Head of caudate nucleus (tissue), 42 donors: ENCODE measurements at regions of chr3 and their contacts with region 1.

Region 1: GRCh38 chr3:43998836-43999727 is 242.6 kb upstream of the TOPAZ1 start:
- DNase-seq: peak in 39 of 42 donors; percentile 38 to 91 (median 75)

Region 2: DNA sequence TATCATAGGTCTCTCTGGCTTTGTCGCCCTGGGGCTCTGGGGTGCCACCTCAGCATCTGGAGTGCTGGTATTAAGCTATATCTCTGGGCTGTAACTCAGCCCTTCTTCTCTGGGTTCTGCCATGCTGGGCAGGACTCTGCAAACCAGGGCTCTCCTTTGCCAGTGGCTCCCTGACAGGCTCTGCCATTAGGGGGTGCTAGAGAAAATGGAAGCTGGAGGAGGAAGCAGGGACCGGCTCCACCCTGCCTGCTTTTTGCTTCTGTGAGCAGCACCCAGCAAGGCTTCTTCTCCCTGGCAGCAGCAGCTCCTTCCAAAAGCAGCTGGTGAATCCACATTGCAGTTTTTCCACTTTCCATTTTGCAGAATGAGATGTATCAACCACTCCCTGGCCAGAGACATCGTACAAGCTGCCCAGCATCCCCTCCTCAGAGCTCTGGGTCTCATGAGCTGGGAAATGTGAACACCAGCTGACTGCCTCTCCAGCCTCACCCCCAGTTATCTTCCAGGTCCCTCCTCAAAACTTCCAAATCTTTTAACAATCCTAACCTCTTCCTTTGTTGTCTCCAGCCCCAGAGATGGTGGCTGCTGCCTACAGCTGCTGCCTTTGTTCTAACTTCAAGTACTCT is 143.3 kb before region 1 on chr3:
- intact Hi-C with region 1: loop called (anchors 5 kb)
- DNase-seq: peak; percentile 49 to 91 (median 73)

Region 3: GRCh38 chr3:44065311-44066094 is 66.4 kb after region 1 on chr3:
- intact Hi-C with region 1: loop called (anchors 10 kb)
- DNase-seq: peak in 4 of 42 donors; percentile 16 to 42 (median 30)

Region 4: DNA sequence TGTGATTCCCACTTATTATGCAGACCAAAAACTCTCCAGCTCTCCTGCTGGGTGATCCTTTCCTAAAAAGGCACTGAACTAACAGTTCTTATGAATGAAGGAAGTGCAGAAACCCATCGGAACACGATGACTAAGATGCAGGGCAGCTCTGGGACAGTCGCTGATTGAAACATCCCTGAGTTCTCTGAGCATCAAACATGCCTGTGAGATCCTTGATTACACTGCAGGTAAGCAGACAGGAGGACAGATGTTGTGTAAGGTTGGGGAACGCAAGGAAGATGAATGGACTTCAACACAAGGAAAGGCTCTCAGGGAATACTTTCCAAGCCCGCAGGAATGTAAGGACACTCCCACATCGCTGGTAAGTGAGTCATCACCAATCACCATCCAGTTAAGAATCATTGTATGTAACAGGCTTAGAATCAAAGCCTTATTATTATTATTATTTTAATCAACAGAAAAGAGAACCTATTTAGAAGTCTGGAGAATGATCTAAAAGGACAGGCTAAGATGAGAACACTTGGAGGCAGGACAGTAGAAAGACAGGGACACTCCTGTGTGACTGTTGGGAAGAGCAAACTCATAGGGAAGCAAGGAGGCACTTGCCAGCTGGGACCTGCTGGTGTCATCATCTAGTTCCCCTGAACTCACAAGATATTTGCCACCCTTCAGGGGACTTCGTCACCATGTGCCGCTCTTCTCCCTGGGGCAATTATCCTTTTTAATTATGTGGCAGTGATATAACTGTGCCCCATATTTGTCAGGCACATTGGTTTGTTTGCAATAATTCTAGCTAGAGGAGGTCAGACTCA is 1201.0 kb after region 1 on chr3:
- intact Hi-C with region 1: no loop called
- DNase-seq: no peak